ENCODE measurements at regions of chr3 and their contacts with region 1.

Region 1: DNA sequence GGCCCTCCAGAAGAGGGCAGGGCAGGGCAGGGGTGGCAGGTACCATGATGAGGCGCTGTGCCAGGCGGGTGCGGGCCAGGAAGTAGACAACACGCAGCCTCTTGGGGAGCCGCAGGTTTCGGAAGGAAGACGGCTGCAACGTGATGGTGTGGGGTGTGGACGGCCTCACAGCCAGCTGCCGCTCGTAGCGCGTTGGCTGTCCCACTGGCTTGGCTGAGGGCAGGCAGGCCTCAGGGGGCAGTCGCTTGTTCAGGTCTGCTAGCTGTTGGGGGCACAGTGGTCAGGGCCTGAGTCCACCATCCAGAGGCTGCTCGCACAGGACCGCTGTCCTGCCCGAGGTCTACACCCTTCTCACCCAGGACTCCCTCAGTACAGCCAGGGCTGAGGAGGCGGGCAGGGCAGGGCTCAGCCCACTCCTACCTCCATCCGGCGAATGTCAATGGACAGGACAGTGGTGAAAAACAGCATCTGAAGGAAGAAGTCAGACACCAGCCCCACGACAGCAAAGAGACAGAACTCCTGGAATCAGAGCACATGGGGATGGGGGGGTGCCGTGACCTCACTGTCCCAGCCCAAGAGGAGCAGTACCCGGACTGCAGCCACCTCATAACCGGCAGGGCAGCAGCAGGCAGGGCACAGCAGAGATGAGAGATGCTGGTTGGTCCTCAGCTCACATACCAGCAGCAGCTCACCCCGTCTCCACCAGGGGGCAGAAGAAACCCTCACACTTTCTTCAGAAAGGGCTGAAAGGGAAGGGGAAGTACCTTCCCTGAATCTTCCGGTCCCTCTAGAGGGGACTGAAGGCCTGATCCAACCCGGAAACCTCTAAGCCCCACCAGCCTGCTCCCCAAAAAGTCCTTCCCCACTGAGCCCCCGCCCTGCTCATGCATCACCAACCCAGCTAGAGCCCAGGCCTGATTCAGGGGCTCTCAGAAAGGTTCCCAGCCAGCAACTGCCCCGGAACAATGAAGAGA is 40.0 kb downstream of the PTPN23 start:
- DNase-seq: peak; percentile 66 to 90 (median 88)
- ATAC-seq: peak; percentile 98
- H3K4me3 ChIP-seq: peak overlapping the region; percentile 29
- H3K4me3 Mint-ChIP-seq: peak overlapping the region; percentile 56 to 86 (median 78)
- H3K27ac ChIP-seq: peak overlapping the region; percentile 79
- H3K27ac Mint-ChIP-seq: peak overlapping the region; percentile 90 to 100 (median 99)
- H3K4me1 ChIP-seq: peaks cover 8 to 15% of the 10 kb centered on the region in 2 donors
- H3K4me1 Mint-ChIP-seq: peaks cover 0 to 22% (median 10%) of the 10 kb centered on the region in 7 donors
- H3K27me3 ChIP-seq: no peaks in the 10 kb centered on the region
- H3K27me3 Mint-ChIP-seq: no peaks in the 10 kb centered on the region

Region 2: DNA sequence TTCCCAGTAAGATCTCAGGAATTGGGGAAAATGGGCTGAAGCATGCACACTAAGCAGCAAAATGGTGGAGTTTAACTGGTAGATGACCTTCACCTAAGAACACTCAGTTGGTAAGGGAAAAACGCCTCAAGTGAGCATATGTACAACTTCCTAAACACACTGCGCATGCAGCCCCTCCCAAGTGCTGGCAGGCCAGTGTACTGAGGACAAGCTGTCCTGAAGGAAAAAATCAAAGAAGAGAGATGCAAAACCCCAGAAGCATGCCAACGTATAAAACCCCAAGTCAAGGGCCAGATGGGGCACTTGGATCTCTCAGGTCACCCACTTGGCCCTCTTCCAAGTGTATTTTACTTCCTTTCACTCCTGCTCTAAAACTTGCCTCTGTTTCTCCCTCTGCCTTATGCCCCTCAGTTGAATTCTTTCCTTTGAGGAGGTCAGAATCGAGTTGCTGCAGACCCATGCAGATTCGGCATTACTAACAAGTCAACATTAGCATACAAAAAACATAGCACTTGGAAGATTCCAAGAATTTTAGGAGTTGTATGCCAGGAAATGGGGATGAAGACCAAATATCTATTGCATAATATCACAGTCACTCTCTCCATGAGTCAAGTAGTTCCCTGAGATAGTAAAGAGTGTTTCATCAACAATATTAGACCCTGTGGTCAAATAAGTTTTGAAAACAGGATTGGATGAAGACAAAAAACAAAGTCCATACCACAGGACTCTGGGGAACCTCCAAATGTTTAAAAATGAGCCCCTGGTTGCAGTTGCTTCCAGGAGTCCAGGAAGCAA is 1414.4 kb before region 1 on chr3:
- CTCF ChIA-PET with region 1: no interaction called
- POLR2A ChIA-PET with region 1: no interaction called
- intact Hi-C with region 1: no loop called
- DNase-seq: no peak
- ATAC-seq: no peak
- H3K4me3 ChIP-seq: no peak overlapping the region
- H3K4me3 Mint-ChIP-seq: no peak overlapping the region
- H3K27ac ChIP-seq: no peak overlapping the region
- H3K27ac Mint-ChIP-seq: no peak overlapping the region
- H3K4me1 ChIP-seq: no peaks in the 10 kb centered on the region
- H3K4me1 Mint-ChIP-seq: peaks cover 0 to 8% (median 0%) of the 10 kb centered on the region in 7 donors
- H3K27me3 ChIP-seq: no peaks in the 10 kb centered on the region
- H3K27me3 Mint-ChIP-seq: peaks cover 0 to 8% (median 0%) of the 10 kb centered on the region in 5 donors

Region 3: DNA sequence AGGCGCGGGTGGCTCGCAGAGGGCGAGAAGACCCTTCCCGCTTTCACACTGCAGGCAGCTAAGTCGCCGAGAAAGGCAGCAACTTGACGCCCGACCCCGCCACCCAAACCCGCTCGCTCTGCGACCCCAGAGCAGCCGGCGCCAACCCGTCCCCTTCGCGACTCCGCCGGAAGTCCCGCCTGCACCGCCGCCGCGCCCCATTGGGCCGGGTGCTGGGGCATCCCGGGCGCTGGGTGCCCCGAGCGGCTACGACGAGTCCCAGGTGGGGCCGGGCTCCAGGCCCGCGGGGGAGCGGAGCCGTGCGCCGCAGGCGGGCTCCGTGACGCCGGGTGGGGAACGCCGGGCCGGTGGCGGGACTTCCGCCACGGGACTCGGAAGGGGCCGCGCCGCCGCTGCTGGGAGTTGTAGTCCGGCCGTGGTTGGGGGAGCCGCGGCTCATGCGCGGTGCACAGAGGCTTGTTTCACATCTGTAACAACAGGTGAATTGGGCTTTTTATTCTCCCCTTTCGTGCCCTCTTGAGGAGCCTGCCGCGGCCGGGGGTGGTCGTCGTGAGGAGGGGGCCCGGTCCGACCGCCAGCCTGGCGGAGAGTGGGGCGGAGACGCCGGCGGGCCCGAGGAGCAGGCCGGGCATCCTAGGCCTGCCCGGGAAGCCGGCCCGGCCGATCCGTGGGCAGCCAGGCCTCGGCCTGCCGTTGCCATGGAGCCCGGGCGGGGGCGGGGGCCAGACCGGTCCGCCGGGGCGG is 382.1 kb after region 1 on chr3 and contains the start of gene DHX30:
- CTCF ChIA-PET with region 1: interaction called, 3 read pairs
- POLR2A ChIA-PET with region 1: no interaction called
- intact Hi-C with region 1: loop called (anchors 5 kb)
- DNase-seq: peak; percentile 77 to 90 (median 82)
- ATAC-seq: peak; percentile 95
- H3K4me3 ChIP-seq: peak within 1 kb of the TSS; percentile 65
- H3K4me3 Mint-ChIP-seq: peak within 1 kb of the TSS; percentile 89 to 98 (median 95)
- H3K27ac ChIP-seq: peak within 1 kb of the TSS; percentile 92
- H3K27ac Mint-ChIP-seq: peak within 1 kb of the TSS; percentile 92 to 98 (median 95)
- H3K4me1 ChIP-seq: peaks cover 11 to 12% of the 10 kb centered on the region in 2 donors
- H3K4me1 Mint-ChIP-seq: peaks cover 6 to 25% (median 20%) of the 10 kb centered on the region in 7 donors
- H3K27me3 ChIP-seq: no peaks in the 10 kb centered on the region
- H3K27me3 Mint-ChIP-seq: no peaks in the 10 kb centered on the region
- total RNA-seq, gene DHX30: 64.1 to 103 (median 92.0) TPM